Activated B cell treated with CpG ODN at 0.5 μM for 24 hours (primary cell): ENCODE measurements at regions of chr5 and their contacts with region 1.

Region 1: GRCh38 chr5:65481635-65482295 is at the start of gene ADAMTS6:
- DNase-seq: peak; percentile 61
- ATAC-seq: peak; percentile 87
- H3K4me3 Mint-ChIP-seq: no peak within 1 kb of the TSS
- H3K27ac Mint-ChIP-seq: peak within 1 kb of the TSS; percentile 83
- H3K4me1 Mint-ChIP-seq: peaks cover 9% of the 10 kb centered on the region
- H3K27me3 Mint-ChIP-seq: no peaks in the 10 kb centered on the region
- CTCF ChIP-seq: no peak
- total RNA-seq, gene ADAMTS6: 3.2 and 4.1 TPM in 2 replicates

Region 2: GRCh38 chr5:64634997-64635686 is 846.6 kb before region 1 on chr5:
- CTCF ChIA-PET with region 1: interaction called, 5 read pairs
- POLR2A ChIA-PET with region 1: no interaction called
- intact Hi-C with region 1: loop called (anchors 1 kb)
- DNase-seq: no peak
- ATAC-seq: no peak
- H3K4me3 Mint-ChIP-seq: no peak overlapping the region
- H3K27ac Mint-ChIP-seq: no peak overlapping the region
- H3K4me1 Mint-ChIP-seq: no peaks in the 10 kb centered on the region
- H3K27me3 Mint-ChIP-seq: peaks cover 20% of the 10 kb centered on the region
- CTCF ChIP-seq: peak; percentile 76

Region 3: GRCh38 chr5:64958757-64959391 is 522.9 kb before region 1 on chr5:
- CTCF ChIA-PET with region 1: interaction called, 47 read pairs
- POLR2A ChIA-PET with region 1: no interaction called
- intact Hi-C with region 1: loop called (anchors 1 kb)
- DNase-seq: no peak
- ATAC-seq: no peak
- H3K4me3 Mint-ChIP-seq: no peak overlapping the region
- H3K27ac Mint-ChIP-seq: no peak overlapping the region
- H3K4me1 Mint-ChIP-seq: no peaks in the 10 kb centered on the region
- H3K27me3 Mint-ChIP-seq: no peaks in the 10 kb centered on the region
- CTCF ChIP-seq: no peak

Region 4: GRCh38 chr5:65076251-65076869 is 405.4 kb before region 1 on chr5:
- CTCF ChIA-PET with region 1: interaction called, 7 read pairs
- POLR2A ChIA-PET with region 1: no interaction called
- intact Hi-C with region 1: loop called (anchors 1 kb)
- DNase-seq: no peak
- ATAC-seq: peak; percentile 94
- H3K4me3 Mint-ChIP-seq: no peak overlapping the region
- H3K27ac Mint-ChIP-seq: no peak overlapping the region
- H3K4me1 Mint-ChIP-seq: peaks cover 21% of the 10 kb centered on the region
- H3K27me3 Mint-ChIP-seq: peaks cover 1% of the 10 kb centered on the region
- CTCF ChIP-seq: no peak

Region 5: DNA sequence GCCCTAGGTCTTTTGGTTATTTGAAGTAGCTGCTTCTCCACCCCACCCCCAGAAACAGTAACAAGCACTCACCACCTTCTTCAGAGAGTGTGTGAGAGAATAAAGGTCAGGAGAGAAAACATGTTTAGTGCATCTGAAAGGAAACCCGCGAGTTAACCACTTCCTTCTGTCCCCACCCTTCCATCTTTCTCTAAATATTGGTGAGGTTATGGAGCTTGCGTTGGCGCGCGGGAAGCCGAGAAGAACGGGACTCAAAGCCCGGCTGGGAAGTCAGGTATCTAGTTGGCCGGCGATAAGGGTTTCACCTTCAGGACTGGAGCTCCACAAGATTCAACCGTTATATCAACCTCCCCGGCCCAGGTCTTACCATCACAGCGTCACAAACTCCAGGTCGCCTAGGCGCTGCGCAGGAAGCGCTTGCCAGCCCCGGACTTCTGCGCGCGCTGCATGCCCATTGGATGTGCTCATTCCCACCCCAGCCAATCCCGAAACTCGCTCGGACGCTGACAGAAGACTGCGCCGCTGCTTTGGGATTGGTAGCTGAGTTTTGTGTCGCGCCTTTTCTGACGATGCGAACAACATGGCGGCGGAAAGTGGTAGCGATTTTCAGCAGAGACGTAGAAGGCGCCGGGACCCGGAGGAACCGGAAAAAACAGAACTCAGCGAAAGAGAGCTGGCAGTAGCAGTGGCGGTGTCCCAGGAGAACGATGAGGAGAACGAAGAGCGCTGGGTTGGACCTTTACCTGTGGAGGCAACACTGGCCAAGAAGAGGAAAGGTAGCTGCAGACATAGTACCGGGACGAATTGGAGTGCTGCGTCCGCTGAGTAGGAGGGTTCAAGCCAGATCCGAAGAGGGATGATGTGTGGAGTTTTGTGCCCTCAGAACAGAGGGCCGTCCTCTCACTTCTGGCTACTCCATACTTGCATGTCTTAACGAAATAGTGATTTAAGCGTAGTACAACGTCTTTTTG is 81.3 kb after region 1 on chr5 and contains the starts of genes CENPK and PPWD1:
- CTCF ChIA-PET with region 1: interaction called, 3 read pairs
- POLR2A ChIA-PET with region 1: interaction called, 17 read pairs
- intact Hi-C with region 1: loop called (anchors 1 kb)
- DNase-seq: peak; percentile 81
- ATAC-seq: peak; percentile 99
- H3K4me3 Mint-ChIP-seq: peak within 1 kb of the TSS; percentile 96
- H3K27ac Mint-ChIP-seq: peak within 1 kb of the TSS; percentile 97
- H3K4me1 Mint-ChIP-seq: peaks cover 41% of the 10 kb centered on the region
- H3K27me3 Mint-ChIP-seq: no peaks in the 10 kb centered on the region
- CTCF ChIP-seq: no peak
- total RNA-seq, gene CENPK: 10.7 and 15.1 TPM in 2 replicates
- total RNA-seq, gene PPWD1: 57.8 and 69.7 TPM in 2 replicates

Region 6: GRCh38 chr5:66144074-66144833 is 662.5 kb after region 1 on chr5 and contains the start of gene SREK1:
- CTCF ChIA-PET with region 1: no interaction called
- POLR2A ChIA-PET with region 1: no interaction called
- intact Hi-C with region 1: loop called (anchors 10 kb)
- DNase-seq: peak; percentile 84
- ATAC-seq: peak; percentile 86
- H3K4me3 Mint-ChIP-seq: peak within 1 kb of the TSS; percentile 99
- H3K27ac Mint-ChIP-seq: peak within 1 kb of the TSS; percentile 100
- H3K4me1 Mint-ChIP-seq: peaks cover 33% of the 10 kb centered on the region
- H3K27me3 Mint-ChIP-seq: no peaks in the 10 kb centered on the region
- CTCF ChIP-seq: no peak
- total RNA-seq, gene SREK1: 78.2 and 104 TPM in 2 replicates